HepG2 (cell line): ENCODE measurements at regions of chr4 and their contacts with region 1.

Region 1: DNA sequence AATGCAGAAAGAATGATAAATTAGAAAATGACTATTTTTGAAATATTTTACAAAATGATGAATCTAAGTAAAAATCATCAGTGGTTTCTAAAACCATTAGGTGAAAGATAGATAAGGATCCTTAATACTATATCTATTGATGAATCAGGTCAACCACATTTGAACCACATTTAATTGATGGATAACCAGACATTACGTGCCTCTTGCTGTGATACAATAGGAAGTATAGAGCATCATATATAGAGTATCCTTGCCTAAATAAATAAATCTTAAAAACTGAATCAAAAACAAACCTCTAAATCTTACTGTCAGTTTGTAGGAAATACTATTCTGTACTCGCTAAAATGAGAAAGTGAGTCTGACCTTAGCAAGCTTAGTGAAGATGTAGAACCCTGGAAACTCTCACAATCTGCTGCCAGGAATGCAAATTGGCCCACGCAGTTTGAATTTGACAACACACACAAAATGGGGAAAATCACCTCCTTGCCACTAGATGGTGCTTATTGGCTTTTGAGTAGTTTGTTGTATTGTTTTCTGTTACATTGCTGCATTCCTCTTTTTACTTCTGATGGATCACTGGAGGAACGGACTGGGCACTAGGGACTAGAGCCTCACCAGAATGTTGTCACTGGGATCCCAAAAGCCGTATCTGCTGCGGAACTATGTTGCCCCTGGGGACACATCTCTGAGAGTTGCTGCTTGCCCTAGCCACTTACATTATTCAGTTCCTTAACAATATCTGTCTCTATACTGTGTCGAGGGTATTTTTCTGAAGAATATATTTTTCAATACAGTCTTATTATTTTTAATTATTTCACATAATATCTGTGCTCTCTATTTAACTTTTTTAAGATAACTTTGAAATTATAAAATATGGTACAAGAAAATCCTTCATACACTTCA is 25.4 kb upstream of the SLAIN2 start:
- DNase-seq: peak; percentile 54
- ATAC-seq: peak; percentile 80
- H3K4me3 ChIP-seq: no peak overlapping the region
- H3K27ac ChIP-seq: no peak overlapping the region
- H3K4me1 ChIP-seq: no peaks in the 10 kb centered on the region
- H3K27me3 ChIP-seq: no peaks in the 10 kb centered on the region; a peak in 1 of 5 replicates
- CTCF ChIP-seq: peak; percentile 83
- EP300 ChIP-seq: no peak
- POLR2A ChIP-seq: no peak
- RAD21 ChIP-seq: peak; percentile 60

Region 2: DNA sequence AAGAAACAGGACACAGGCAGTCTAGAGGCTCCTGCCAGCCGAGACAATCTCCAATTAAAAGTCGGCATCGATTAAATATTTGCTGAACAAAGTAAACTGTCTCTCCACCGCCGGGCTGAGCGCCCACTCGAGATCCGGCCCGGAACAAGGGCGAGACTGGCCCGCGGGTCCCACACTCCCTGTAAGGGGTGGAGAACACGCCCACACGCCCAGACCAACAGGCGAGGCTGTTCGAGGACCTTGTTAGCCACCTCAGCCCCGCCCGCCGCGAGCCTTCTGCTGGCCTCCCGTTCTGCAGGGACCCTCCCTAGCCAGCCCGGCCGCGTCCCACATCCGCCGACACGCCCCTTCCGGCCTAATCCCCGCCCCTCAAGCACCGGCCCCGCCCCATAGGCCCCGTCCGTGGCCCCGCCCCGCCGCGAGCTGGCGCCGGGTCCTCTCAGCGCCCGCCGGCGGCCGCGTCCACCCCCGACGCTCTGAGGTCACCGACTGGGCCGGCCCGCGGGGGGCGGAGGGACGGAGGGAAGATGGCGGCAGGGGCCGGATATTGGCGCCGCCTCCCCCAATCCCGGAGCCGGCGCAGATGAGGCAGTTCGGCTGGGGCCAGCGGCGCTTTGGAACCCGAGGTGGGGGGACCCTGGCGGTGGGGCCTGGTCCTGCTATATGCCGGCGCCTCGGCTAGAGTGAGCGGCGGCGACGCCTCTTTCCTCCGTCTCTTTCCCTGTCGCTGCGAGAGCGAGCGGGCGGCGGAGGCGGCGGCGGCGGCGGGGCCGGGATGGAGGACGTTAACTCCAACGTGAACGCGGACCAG is 25.2 kb after region 1 on chr4 and contains the start of gene SLAIN2:
- CTCF ChIA-PET with region 1: no interaction called
- POLR2A ChIA-PET with region 1: no interaction called
- in situ Hi-C with region 1: no loop called
- intact Hi-C with region 1: loop called (anchors 1 kb)
- DNase-seq: peak; percentile 91
- ATAC-seq: peak; percentile 95
- H3K4me3 ChIP-seq: peak within 1 kb of the TSS; percentile 88 to 99 (median 98)
- H3K27ac ChIP-seq: peak within 1 kb of the TSS; percentile 91
- H3K4me1 ChIP-seq: peaks cover 57% of the 10 kb centered on the region
- H3K27me3 ChIP-seq: no peaks in the 10 kb centered on the region; a peak in 1 of 5 replicates
- CTCF ChIP-seq: 0 out of 2 replicates have a peak, but pooled peaks have one; percentile 5
- EP300 ChIP-seq: no peak
- POLR2A ChIP-seq: peak; percentile 68 to 91
- RAD21 ChIP-seq: 0 out of 2 replicates have a peak, but pooled peaks have one; percentile 17
- total RNA-seq, gene SLAIN2: 20.0 and 20.7 TPM in 2 replicates

Region 3: GRCh38 chr4:48429709-48430474 is 113.9 kb after region 1 on chr4:
- CTCF ChIA-PET with region 1: no interaction called
- POLR2A ChIA-PET with region 1: no interaction called
- in situ Hi-C with region 1: no loop called
- intact Hi-C with region 1: loop called (anchors 10 kb)
- DNase-seq: no peak
- ATAC-seq: no peak; the same call in 2 of the 3 replicates
- H3K4me3 ChIP-seq: no peak overlapping the region
- H3K27ac ChIP-seq: no peak overlapping the region
- H3K4me1 ChIP-seq: no peaks in the 10 kb centered on the region
- H3K27me3 ChIP-seq: no peaks in the 10 kb centered on the region
- CTCF ChIP-seq: no peak
- EP300 ChIP-seq: no peak
- POLR2A ChIP-seq: no peak
- RAD21 ChIP-seq: no peak

Region 4: GRCh38 chr4:48546336-48546735 is 230.4 kb after region 1 on chr4:
- CTCF ChIA-PET with region 1: interaction called, 23 read pairs
- POLR2A ChIA-PET with region 1: no interaction called
- in situ Hi-C with region 1: loop called (anchors 5 kb)
- intact Hi-C with region 1: loop called (anchors 1 kb)
- DNase-seq: peak; percentile 34
- ATAC-seq: no peak
- H3K4me3 ChIP-seq: no peak overlapping the region
- H3K27ac ChIP-seq: no peak overlapping the region
- H3K4me1 ChIP-seq: no peaks in the 10 kb centered on the region
- H3K27me3 ChIP-seq: no peaks in the 10 kb centered on the region
- CTCF ChIP-seq: peak; percentile 75
- EP300 ChIP-seq: no peak
- POLR2A ChIP-seq: no peak
- RAD21 ChIP-seq: peak; percentile 33; the same call in 1 of the 2 replicates

Region 5: GRCh38 chr4:48963042-48963679 is 647.2 kb after region 1 on chr4:
- CTCF ChIA-PET with region 1: no interaction called
- POLR2A ChIA-PET with region 1: no interaction called
- in situ Hi-C with region 1: no loop called
- intact Hi-C with region 1: loop called (anchors 10 kb)
- DNase-seq: peak; percentile 82
- ATAC-seq: peak; percentile 95
- H3K4me3 ChIP-seq: no peak overlapping the region
- H3K27ac ChIP-seq: no peak overlapping the region
- H3K4me1 ChIP-seq: no peaks in the 10 kb centered on the region
- H3K27me3 ChIP-seq: no peaks in the 10 kb centered on the region
- CTCF ChIP-seq: peak; percentile 89
- EP300 ChIP-seq: no peak
- POLR2A ChIP-seq: no peak
- RAD21 ChIP-seq: peak; percentile 81